AG04449 (cell line): ENCODE measurements at regions of chr2 and their contacts with region 1.

Region 1: DNA sequence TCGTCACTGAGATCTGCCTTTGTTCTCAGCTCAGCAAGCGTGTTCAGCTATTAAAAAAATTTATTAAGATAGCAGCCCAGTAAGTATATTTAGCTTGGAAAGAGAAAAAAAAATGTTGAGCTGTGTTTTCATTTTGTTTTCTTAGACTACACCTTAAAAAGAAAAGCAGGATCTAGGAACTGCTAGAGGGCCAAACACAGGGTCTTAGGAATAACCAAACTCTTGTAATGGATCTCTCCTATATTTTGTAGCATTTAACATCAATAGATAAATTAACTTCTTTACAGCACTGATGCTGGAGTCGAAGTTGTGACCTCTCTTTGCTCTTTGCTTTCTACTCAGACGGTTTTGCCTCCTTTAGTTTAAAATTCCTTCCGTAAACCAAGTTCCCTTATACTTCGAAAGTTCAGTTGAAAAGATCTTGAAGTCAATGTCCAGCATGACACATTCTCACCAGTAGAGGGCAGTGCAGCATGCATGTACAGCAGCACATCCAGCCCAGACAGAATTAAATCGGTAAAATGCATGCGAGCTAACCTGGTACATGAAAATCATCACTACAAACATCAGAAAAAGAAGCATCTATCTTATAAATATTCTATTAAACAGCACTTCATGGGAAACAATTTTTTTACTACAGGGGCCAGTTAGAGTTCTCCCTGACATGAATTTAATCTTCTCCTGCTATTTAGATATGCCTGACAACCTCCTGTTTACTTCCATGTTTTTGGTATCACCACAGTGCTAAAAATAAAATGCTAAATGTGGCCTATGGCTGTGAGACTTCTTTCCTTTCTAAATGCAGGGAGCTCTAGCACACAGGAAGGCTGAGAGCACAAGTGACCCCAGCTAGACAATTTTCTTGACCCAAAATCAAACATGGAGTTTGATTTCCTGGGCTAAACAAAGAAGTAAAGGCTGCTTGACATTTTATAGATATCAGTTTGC is 48.2 kb upstream of the MAP3K20 start:
- DNase-seq: no peak
- H3K4me3 ChIP-seq: no peak overlapping the region
- CTCF ChIP-seq: peak; percentile 76

Region 2: DNA sequence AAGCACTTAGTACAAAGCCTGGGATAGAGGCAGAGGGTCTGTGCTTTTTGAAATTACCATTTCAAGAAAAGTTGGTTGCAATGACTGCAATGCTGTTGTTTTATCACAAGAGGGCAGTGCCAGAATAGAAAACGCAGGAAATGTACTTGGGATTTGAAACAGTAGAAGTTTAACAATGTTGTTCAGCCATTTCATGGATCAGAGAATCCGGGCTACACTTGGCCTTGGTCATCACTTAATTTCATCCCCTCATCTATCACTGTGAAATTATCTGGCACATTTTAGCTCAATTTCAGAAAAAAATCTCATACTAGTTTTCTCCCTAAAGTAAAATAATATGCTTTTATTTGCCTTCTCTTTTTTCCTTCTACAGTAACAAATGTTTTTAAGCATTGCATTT is 221.0 kb before region 1 on chr2:
- CTCF ChIA-PET with region 1: interaction called, 53 read pairs
- POLR2A ChIA-PET with region 1: no interaction called
- DNase-seq: no peak
- H3K4me3 ChIP-seq: no peak overlapping the region
- CTCF ChIP-seq: peak; percentile 64

Region 3: DNA sequence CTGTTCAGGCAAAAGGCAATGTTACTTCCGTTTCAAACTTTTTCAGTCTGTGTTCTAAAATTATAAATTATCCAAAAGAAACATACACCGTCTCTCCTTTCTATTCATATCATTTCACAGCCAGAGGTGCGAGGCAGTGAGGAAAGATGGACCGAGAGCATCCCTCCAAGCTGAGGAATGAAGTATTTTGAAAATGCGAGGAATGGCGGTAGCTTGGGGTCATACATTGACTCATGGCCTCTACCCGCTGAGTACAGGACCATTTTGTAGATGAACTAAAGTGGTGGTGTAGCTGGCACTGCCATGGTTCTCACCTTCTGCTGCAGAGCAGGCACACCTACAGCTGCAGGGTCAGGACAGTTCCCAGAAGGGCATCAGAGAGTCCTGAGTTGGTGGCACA is 12.1 kb before region 1 on chr2:
- CTCF ChIA-PET with region 1: interaction called, 31 read pairs
- POLR2A ChIA-PET with region 1: no interaction called
- DNase-seq: no peak
- H3K4me3 ChIP-seq: no peak overlapping the region
- CTCF ChIP-seq: no peak

Region 4: GRCh38 chr2:173090973-173091660 is 63.7 kb after region 1 on chr2:
- CTCF ChIA-PET with region 1: interaction called, 33 read pairs
- POLR2A ChIA-PET with region 1: no interaction called
- DNase-seq: no peak
- H3K4me3 ChIP-seq: no peak overlapping the region
- CTCF ChIP-seq: no peak

Region 5: DNA sequence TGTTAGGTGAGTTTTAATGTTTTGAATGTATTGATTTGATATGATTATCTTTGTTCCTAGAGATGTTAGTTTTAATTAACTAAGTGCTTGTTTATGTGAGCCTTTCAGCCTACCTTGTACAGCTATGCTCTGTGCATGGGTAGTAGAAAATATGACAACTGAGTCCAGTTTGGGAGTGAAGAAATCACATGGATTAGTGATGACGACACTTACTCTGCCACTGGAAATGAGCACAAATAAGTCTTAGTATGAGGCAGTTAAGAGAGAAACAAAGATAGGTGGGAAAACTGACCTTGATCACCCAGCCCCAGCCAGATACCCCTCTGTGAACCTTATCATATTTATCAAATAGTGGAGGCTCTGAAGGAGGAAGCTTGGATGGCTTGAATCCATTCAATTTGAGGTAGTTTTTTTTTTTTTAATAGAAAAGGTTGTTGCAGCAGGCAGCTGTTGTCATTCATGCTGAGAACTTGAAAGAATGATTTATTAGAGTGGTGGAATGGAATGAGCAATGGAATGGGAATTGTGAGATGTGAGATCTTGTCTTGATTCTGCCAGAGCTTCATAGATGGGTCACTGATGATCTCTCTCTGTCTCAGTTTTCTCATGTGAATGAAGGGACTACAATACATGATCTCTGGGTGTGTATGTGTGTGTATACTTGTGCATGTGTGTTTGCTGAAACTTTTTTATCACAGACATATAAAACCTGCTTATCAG is 144.6 kb after region 1 on chr2:
- CTCF ChIA-PET with region 1: interaction called, 12 read pairs
- POLR2A ChIA-PET with region 1: no interaction called
- DNase-seq: no peak
- H3K4me3 ChIP-seq: no peak overlapping the region
- CTCF ChIP-seq: no peak

Region 6: GRCh38 chr2:173210270-173211196 is 183.1 kb after region 1 on chr2:
- CTCF ChIA-PET with region 1: interaction called, 678 read pairs
- POLR2A ChIA-PET with region 1: no interaction called
- DNase-seq: peak; percentile 86
- H3K4me3 ChIP-seq: no peak overlapping the region
- CTCF ChIP-seq: peak; percentile 84